ENCODE measurements at regions of chr3 and their contacts with region 1.

Region 1: DNA sequence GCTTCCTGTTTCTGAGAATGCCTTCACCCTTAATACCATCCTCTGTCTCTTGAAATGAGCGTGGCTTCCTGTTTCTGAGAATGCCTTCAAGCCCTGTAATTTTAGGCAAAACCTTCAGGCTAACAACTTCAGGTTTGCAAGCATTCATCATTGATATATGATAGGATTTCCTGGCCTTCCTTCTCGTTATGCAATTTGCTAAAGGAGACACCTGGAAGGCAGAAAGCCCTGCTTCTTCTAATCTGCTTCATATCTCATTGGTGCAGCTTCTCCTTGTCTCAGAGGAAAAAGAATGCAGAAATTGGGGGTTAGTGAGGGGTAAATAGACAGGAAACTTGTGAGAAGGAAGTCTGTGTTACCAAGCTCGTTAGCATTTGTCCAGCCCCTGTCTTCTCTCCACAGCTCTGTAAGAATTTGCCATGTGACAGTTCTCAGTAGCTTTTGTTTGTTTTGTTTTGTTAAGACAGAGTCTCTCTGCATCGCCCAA is 7.3 kb downstream of the ARL6IP5 start:
- DNase-seq: no peak
- H3K4me3 Mint-ChIP-seq: peak overlapping the region; percentile 58
- H3K27ac Mint-ChIP-seq: peak overlapping the region; percentile 88
- H3K4me1 Mint-ChIP-seq: peaks cover 86% of the 10 kb centered on the region
- H3K27me3 Mint-ChIP-seq: no peaks in the 10 kb centered on the region

Region 2: GRCh38 chr3:69033470-69033869 is 58.6 kb before region 1 on chr3:
- CTCF ChIA-PET with region 1: no interaction called
- POLR2A ChIA-PET with region 1: interaction called, 5 read pairs
- intact Hi-C with region 1: loop called (anchors 2 kb)
- DNase-seq: peak; percentile 30
- H3K4me3 Mint-ChIP-seq: no peak overlapping the region
- H3K27ac Mint-ChIP-seq: peak overlapping the region; percentile 65
- H3K4me1 Mint-ChIP-seq: peaks cover 16% of the 10 kb centered on the region
- H3K27me3 Mint-ChIP-seq: no peaks in the 10 kb centered on the region

Measured in activated CD4-positive, alpha-beta memory T cell treated with anti-CD3 and anti-CD28 coated beads for 36 hours (primary cell).